HCT116 (cell line): ENCODE measurements at regions of chr11 and their contacts with region 1.

Region 1: GRCh38 chr11:47213985-47214564 is 699 bp upstream of the DDB2 start:
- DNase-seq: peak; percentile 81
- ATAC-seq: peak; percentile 85
- H3K4me3 ChIP-seq: peak overlapping the region; percentile 58 to 73
- H3K27ac ChIP-seq: peak overlapping the region; percentile 93
- H3K4me1 ChIP-seq: peaks cover 19 to 50% of the 10 kb centered on the region in 2 experiments
- H3K27me3 ChIP-seq: no peaks in the 10 kb centered on the region
- CTCF ChIP-seq: no peak
- POLR2A ChIP-seq: peak; percentile 62
- RAD21 ChIP-seq: no peak

Region 2: DNA sequence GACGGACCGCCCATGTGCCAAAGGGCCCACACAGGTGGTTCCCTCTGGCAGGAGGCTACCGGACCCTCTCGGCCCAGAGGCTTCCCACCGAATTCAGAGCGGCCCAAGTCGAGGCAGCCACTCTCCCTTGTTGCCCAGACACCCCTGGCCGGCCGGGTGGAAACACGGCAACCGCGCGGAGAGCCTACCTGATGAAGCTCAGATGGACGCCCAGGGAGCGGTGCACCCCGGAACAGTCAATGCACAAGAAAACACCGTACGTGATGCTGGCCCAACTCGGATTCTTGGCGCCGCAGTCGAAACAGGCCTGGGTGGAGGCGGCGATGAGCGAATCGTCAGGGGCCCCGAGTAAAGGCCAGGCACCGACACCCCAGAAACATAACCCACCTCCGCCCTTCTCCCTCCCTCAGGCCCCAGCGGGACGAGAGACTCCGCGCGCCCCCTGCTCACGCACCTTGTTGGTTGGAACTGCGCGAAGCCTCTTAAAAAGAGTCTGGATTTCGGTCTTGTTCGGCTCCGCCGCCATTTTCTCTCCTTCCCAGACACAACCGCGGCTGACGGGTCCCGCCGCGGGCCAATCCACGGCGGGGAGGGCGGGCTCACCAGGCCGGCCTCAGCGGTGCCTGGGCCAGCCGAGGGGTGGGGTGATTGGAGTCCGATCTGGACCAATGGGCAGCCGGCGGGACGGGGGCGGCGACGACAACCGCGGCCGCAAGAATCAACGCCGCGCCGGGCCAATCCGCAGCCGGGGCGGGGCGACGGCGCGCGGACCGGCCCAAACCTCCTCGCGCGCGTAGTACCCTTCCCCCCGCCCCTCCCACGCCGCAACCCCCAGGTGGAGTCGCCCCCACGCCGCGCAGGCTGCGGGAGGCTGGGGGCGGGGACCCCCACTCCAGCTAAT is 37.5 kb before region 1 on chr11 and contains the start of gene ARFGAP2:
- CTCF ChIA-PET with region 1: interaction called, 3 read pairs
- POLR2A ChIA-PET with region 1: no interaction called
- RAD21 ChIA-PET with region 1: interaction called in 1 of 2 experiments, 5 read pairs
- intact Hi-C with region 1: loop called (anchors 5 kb)
- DNase-seq: peak; percentile 86
- ATAC-seq: peak; percentile 94
- H3K4me3 ChIP-seq: peak within 1 kb of the TSS; percentile 97 to 99
- H3K27ac ChIP-seq: peak within 1 kb of the TSS; percentile 89
- H3K4me1 ChIP-seq: peaks cover 11 to 24% of the 10 kb centered on the region in 2 experiments; a peak in 3 of 4 replicates
- H3K27me3 ChIP-seq: no peaks in the 10 kb centered on the region
- CTCF ChIP-seq: no peak
- POLR2A ChIP-seq: no peak
- RAD21 ChIP-seq: no peak
- total RNA-seq, gene ARFGAP2: 73.5 TPM

Region 3: GRCh38 chr11:47186076-47186936 is 27.8 kb before region 1 on chr11 and contains the start of gene PACSIN3:
- CTCF ChIA-PET with region 1: interaction called, 6 read pairs
- POLR2A ChIA-PET with region 1: interaction called, 29 read pairs
- RAD21 ChIA-PET with region 1: no interaction called
- intact Hi-C with region 1: loop called (anchors 1 kb)
- DNase-seq: no peak
- ATAC-seq: peak; percentile 75
- H3K4me3 ChIP-seq: peak within 1 kb of the TSS; percentile 58 to 94
- H3K27ac ChIP-seq: peak within 1 kb of the TSS; percentile 96
- H3K4me1 ChIP-seq: peaks cover 18 to 42% of the 10 kb centered on the region in 2 experiments
- H3K27me3 ChIP-seq: no peaks in the 10 kb centered on the region
- CTCF ChIP-seq: no peak
- POLR2A ChIP-seq: peak; percentile 32
- RAD21 ChIP-seq: no peak
- total RNA-seq, gene PACSIN3: 63.1 TPM

Region 4: GRCh38 chr11:47233051-47233450 is 19.0 kb after region 1 on chr11:
- CTCF ChIA-PET with region 1: no interaction called
- POLR2A ChIA-PET with region 1: interaction called, 12 read pairs
- RAD21 ChIA-PET with region 1: no interaction called
- intact Hi-C with region 1: no loop called
- DNase-seq: no peak
- ATAC-seq: no peak
- H3K4me3 ChIP-seq: no peak overlapping the region
- H3K27ac ChIP-seq: no peak overlapping the region
- H3K4me1 ChIP-seq: peaks cover 0 to 8% of the 10 kb centered on the region in 2 experiments; a peak in 1 of 4 replicates
- H3K27me3 ChIP-seq: no peaks in the 10 kb centered on the region
- CTCF ChIP-seq: no peak
- POLR2A ChIP-seq: no peak
- RAD21 ChIP-seq: no peak

Region 5: DNA sequence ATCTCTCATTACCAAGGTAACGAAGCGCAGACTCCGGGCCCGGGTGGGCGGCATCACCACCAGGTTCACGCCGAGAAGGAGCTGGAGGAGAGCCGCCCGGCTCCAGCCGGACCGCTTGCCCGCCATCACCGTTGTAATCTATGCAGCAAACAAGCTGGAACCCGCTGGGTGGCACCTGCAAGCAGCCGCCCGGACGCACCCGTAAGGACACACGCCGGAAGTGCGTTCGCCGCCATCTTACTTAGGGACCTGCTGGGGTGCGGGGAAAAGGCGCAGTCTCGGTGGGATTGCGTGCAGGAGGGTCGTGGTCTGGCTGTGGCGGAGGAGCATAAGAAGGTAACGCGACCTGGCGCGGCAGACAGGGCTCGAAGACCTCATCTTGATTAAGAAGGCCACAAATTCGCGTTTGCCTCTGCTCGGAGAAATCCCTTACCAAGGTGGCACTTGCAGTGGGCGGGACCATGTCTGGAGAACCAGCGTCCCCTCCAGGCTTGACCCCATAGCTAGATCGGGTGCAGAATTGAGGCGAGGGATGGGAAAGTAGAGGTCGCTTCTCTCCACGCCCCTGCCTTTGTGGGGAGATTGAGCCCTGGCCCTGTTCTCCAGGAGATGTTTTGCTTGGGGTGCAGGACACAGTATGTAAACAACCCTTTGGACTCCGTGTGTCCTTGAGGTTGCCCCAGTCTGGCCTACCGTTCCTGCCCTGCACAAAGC is 34.7 kb after region 1 on chr11 and contains the start of gene ACP2:
- CTCF ChIA-PET with region 1: interaction called, 6 read pairs
- POLR2A ChIA-PET with region 1: interaction called, 16 read pairs
- RAD21 ChIA-PET with region 1: no interaction called
- intact Hi-C with region 1: no loop called
- DNase-seq: peak; percentile 79
- ATAC-seq: peak; percentile 91
- H3K4me3 ChIP-seq: peak within 1 kb of the TSS; percentile 71 to 96
- H3K27ac ChIP-seq: peak within 1 kb of the TSS; percentile 73
- H3K4me1 ChIP-seq: peaks cover 7 to 16% of the 10 kb centered on the region in 2 experiments; a peak in 2 of 4 replicates
- H3K27me3 ChIP-seq: no peaks in the 10 kb centered on the region
- CTCF ChIP-seq: 0 out of 6 replicates have a peak, but pooled peaks of 2 of the 3 experiments have one; percentile 16 to 28
- POLR2A ChIP-seq: peak; percentile 95
- RAD21 ChIP-seq: peak; percentile 41
- total RNA-seq, gene ACP2: 21.5 TPM